ENCODE measurements at regions of chr3 and their contacts with region 1.

Region 1: DNA sequence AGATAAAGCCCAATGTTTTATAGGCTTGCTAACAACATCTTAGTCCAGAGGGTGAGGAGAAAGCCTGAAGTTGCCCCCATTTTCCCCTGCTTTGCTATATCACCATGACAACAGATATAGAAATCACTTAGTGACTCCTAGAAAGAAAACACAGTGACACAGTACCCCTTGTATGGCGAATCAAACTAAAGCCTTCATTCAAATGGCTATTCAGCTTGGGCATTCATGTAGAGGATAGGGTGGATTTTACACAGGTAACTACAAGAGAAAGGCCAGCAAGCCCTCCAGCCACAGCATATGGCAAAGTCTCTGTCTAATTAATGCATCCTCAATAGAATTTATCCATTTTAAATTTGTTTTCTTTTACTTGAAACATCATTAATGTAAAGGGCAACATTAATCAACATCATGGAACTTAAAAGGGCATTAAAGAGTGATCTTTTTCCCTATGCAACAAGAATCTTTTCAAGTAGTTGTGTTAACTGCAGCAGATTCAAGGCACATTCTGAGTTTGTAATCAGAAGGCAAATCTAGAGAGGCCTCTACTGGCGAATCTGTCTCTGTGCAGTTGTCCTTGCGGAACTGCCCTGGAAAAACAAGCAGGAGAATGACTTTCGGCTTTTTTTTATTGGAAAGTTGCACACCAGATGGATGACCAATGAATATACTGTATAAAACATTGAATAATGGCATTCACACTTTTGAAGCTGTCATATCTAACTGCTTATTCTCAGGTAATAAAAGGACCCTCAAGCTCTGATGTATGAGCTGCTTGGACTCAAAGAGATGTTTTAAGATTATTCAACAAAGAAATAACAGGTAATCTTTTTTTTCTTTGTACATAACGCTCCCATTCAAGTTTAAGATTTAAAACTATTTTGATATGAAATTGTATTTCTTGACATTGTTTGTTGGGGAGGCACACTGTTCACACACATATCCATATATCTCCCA is 621.7 kb upstream of the AGTR1 start:
- DNase-seq: no peak
- ATAC-seq: peak; percentile 62
- H3K4me3 ChIP-seq: no peak overlapping the region
- H3K27ac ChIP-seq: no peak overlapping the region
- H3K4me1 ChIP-seq: no peaks in the 10 kb centered on the region
- H3K27me3 ChIP-seq: no peaks in the 10 kb centered on the region
- CTCF ChIP-seq: peak; percentile 23 to 49 (median 47); a peak in 4 of 6 replicates
- EP300 ChIP-seq: no peak
- POLR2A ChIP-seq: no peak
- RAD21 ChIP-seq: peak; percentile 49

Region 2: GRCh38 chr3:147361454-147362420 is 714.3 kb before region 1 on chr3:
- CTCF ChIA-PET with region 1: interaction called, 40 read pairs
- POLR2A ChIA-PET with region 1: no interaction called
- RAD21 ChIA-PET with region 1: interaction called, 16 read pairs
- SMC1A ChIA-PET with region 1: interaction called, 14 read pairs
- in situ Hi-C with region 1: no loop called
- intact Hi-C with region 1: no loop called
- DNase-seq: no peak
- ATAC-seq: peak; percentile 94
- H3K4me3 ChIP-seq: no peak overlapping the region
- H3K27ac ChIP-seq: no peak overlapping the region
- H3K4me1 ChIP-seq: no peaks in the 10 kb centered on the region
- H3K27me3 ChIP-seq: peaks cover 5 to 26% of the 10 kb centered on the region in 2 experiments
- CTCF ChIP-seq: peak; percentile 61 to 66 (median 64)
- EP300 ChIP-seq: no peak
- POLR2A ChIP-seq: no peak
- RAD21 ChIP-seq: peak; percentile 41; the same call in 1 of the 2 replicates

Region 3: DNA sequence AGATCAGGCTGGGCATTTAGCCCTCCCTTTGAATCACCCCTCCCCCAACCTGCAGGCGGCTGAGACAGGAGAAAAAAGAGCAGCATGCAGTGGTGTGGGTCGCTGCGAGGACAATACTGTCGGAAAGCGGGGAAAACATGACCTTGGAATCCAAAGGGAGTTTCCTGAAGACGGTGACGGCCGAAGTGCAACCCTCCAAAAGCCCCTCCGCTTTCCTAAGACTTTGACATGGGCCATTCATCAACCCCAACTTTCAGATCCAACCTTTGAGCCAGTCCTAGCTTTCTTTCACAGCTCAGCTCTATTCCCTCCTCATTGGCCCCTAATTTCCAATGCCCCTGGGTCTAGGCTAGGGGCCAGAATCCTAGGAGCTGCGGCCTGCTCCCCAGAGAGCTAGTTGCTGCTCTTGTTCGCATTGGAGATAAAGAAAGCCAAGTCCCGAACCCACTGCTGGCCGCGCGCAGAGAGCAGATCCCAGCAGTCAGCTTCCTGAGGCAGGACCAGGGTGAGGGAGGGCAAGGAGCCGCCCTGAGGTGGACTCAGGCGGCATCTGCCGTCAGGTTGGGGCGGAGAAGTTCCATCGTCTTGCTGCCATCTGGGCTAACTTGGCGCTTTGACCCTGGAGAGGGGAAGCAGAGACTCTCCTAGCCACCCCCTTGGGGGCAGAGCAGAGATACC is 670.7 kb before region 1 on chr3:
- CTCF ChIA-PET with region 1: no interaction called
- POLR2A ChIA-PET with region 1: no interaction called
- RAD21 ChIA-PET with region 1: no interaction called
- SMC1A ChIA-PET with region 1: no interaction called
- in situ Hi-C with region 1: no loop called
- intact Hi-C with region 1: no loop called
- DNase-seq: no peak
- ATAC-seq: no peak
- H3K4me3 ChIP-seq: no peak overlapping the region
- H3K27ac ChIP-seq: no peak overlapping the region
- H3K4me1 ChIP-seq: no peaks in the 10 kb centered on the region
- H3K27me3 ChIP-seq: peaks cover 9 to 13% of the 10 kb centered on the region in 2 experiments; a peak in 3 of 4 replicates
- CTCF ChIP-seq: no peak
- EP300 ChIP-seq: no peak
- POLR2A ChIP-seq: no peak
- RAD21 ChIP-seq: no peak

Region 4: DNA sequence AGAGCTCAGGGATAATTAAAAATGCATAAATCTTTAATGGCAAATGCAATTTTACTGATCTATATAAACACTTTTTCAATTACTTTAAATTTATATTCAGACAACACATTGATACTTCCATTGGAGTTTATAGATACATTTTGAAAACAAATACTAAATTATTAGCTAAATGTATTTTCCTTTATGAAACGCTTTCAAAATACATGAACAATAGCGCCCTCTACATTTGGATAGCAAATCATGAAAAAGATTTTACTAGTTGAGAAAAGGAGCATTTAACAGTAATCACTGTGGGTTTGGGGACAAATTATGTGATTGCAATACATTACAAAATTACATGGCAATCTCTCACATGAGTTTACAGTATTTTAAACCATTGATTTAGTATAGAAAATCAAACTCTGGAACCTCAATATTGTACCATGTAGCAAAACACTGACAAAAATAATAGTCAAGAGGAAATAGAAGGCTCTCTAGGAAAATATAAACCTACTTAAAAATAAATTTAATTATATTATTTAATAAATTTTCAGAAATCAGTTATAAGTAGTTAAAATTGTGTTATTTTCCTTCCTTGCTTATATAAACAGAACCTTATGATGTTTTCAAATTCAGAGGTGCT is 458.9 kb before region 1 on chr3:
- CTCF ChIA-PET with region 1: interaction called, 6 read pairs
- POLR2A ChIA-PET with region 1: no interaction called
- RAD21 ChIA-PET with region 1: interaction called, 5 read pairs
- SMC1A ChIA-PET with region 1: interaction called, 4 read pairs
- in situ Hi-C with region 1: no loop called
- intact Hi-C with region 1: loop called (anchors 10 kb)
- DNase-seq: no peak
- ATAC-seq: no peak
- H3K4me3 ChIP-seq: no peak overlapping the region
- H3K27ac ChIP-seq: no peak overlapping the region
- H3K4me1 ChIP-seq: no peaks in the 10 kb centered on the region
- H3K27me3 ChIP-seq: no peaks in the 10 kb centered on the region
- CTCF ChIP-seq: peak; percentile 32 to 41 (median 39); a peak in 3 of 6 replicates
- EP300 ChIP-seq: no peak
- POLR2A ChIP-seq: no peak
- RAD21 ChIP-seq: peak; percentile 59

Region 5: DNA sequence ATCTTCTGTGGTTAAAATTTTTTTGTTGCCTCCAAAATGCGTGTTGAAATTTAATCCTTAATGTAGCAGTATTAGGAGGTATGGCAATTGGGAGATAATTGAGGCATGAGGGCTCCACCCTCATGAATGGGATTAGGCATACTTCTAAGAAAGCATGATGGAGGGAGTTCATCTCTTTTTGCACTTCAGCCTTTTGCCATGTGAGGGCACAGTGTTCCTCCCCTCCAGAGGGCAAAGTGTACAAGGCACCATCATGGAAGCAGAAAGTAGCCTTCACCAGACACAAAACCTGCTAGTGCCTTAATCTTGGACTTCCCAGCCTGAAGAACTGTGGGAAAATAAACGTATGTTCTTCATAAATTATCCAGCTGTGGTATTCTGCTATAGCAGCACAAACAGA is 237.4 kb before region 1 on chr3:
- CTCF ChIA-PET with region 1: interaction called, 5 read pairs
- POLR2A ChIA-PET with region 1: no interaction called
- RAD21 ChIA-PET with region 1: interaction called, 4 read pairs
- SMC1A ChIA-PET with region 1: interaction called, 13 read pairs
- in situ Hi-C with region 1: no loop called
- intact Hi-C with region 1: loop called (anchors 2 kb)
- DNase-seq: no peak
- ATAC-seq: peak; percentile 59; the same call in 2 of the 3 replicates
- H3K4me3 ChIP-seq: no peak overlapping the region
- H3K27ac ChIP-seq: no peak overlapping the region
- H3K4me1 ChIP-seq: no peaks in the 10 kb centered on the region
- H3K27me3 ChIP-seq: no peaks in the 10 kb centered on the region
- CTCF ChIP-seq: peak; percentile 8 to 35 (median 18); a peak in 3 of 6 replicates
- EP300 ChIP-seq: no peak
- POLR2A ChIP-seq: no peak
- RAD21 ChIP-seq: no peak

Region 6: DNA sequence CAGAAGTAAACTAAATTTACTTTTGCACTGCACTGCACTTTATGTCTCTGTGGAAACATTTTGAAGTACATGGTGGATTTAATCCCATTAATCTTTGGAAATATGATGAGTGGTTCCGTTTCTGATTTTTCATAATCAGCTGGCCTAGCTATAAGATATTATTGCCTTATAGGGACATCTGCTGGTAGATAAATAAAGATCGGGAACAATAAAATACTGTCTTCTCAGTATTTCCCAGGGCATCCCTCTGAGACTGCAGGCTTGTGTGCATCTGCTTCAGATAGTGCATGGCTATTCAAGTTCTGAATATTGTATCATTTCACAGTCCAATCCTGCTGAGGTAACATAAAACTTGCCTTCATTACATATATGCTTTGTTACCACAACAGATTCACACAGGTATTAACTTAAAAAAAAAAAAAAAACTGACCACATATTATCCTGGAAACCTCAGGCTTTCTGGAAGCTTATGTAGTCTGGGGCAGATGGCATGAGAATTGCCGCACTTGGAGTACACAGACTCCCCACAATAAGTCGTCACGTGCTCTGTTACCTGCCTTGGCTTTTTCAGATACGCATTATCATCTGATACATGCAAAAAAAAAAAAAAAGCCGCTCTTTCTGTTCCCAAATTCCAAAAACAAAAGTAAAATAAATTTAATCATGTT is 290.8 kb after region 1 on chr3:
- CTCF ChIA-PET with region 1: interaction called, 25 read pairs
- POLR2A ChIA-PET with region 1: no interaction called
- RAD21 ChIA-PET with region 1: interaction called, 16 read pairs
- SMC1A ChIA-PET with region 1: interaction called, 9 read pairs
- in situ Hi-C with region 1: no loop called
- intact Hi-C with region 1: loop called (anchors 5 kb)
- DNase-seq: no peak
- ATAC-seq: peak; percentile 66
- H3K4me3 ChIP-seq: no peak overlapping the region
- H3K27ac ChIP-seq: no peak overlapping the region
- H3K4me1 ChIP-seq: no peaks in the 10 kb centered on the region
- H3K27me3 ChIP-seq: no peaks in the 10 kb centered on the region
- CTCF ChIP-seq: peak; percentile 14 to 42 (median 19); a peak in 3 of 6 replicates
- EP300 ChIP-seq: no peak
- POLR2A ChIP-seq: no peak
- RAD21 ChIP-seq: peak; percentile 64

Measured in GM12878 (cell line).